ENCODE measurements at regions of chr2 and their contacts with region 1.

Region 1: DNA sequence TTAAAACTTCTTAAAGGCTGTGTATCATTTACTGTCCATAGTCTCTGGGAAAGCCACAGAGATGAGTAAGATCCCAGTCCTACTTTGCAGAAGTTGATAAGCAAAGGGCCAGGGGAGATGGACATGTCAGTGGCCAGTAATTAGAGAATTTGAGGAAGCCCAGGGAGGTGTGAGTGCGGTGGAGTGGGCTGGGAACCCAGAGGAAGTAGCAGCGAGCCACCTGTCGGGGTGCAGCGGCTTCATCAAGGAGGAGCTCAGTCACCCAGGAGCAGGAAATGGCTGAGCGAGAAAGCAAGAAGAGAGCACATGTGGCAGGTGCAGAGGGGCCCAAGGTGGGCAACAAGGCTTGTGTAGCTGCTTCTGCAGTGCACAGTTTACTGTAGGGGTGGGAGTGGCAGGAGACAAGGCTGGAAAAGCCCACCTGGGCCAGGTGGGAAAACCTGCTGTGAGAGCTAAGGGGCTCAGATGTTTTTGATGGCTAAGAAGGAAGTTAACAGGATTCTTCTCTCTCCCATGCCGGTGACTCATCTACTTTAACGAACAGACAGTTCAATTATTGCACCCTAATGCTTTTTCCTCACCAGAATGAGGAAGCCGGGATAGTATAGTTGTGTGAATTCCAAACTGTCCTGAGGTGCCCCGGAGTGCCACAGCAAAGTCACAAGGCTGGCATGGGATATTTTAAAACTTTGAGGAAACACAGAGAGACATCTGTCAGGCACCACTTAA is 34.8 kb upstream of the MGAT5 start:
- DNase-seq: peak; percentile 12 to 77 (median 40)
- ATAC-seq: peak; percentile 71
- H3K4me3 ChIP-seq: peak overlapping the region; percentile 15
- H3K4me3 Mint-ChIP-seq: peak overlapping the region; percentile 49
- H3K27ac ChIP-seq: peak overlapping the region; percentile 32 to 69
- H3K27ac Mint-ChIP-seq: peak overlapping the region; percentile 87
- H3K4me1 ChIP-seq: peaks cover 50% of the 10 kb centered on the region
- H3K4me1 Mint-ChIP-seq: peaks cover 76% of the 10 kb centered on the region
- H3K27me3 ChIP-seq: no peaks in the 10 kb centered on the region
- H3K27me3 Mint-ChIP-seq: no peaks in the 10 kb centered on the region
- CTCF ChIP-seq: no peak

Region 2: GRCh38 chr2:134181210-134181609 is 37.9 kb before region 1 on chr2:
- CTCF ChIA-PET with region 1: interaction called, 4 read pairs
- POLR2A ChIA-PET with region 1: interaction called, 8 read pairs
- intact Hi-C with region 1: loop called in 1 of 2 experiments (anchors 5 kb)
- DNase-seq: peak in 13 of 14 experiments; percentile 38 to 86 (median 51)
- ATAC-seq: peak; percentile 81
- H3K4me3 ChIP-seq: no peak overlapping the region
- H3K4me3 Mint-ChIP-seq: peak overlapping the region; percentile 52
- H3K27ac ChIP-seq: peak overlapping the region in 1 of 2 donors; percentile 48
- H3K27ac Mint-ChIP-seq: peak overlapping the region; percentile 84
- H3K4me1 ChIP-seq: peaks cover 74% of the 10 kb centered on the region
- H3K4me1 Mint-ChIP-seq: peaks cover 96% of the 10 kb centered on the region
- H3K27me3 ChIP-seq: no peaks in the 10 kb centered on the region
- H3K27me3 Mint-ChIP-seq: no peaks in the 10 kb centered on the region
- CTCF ChIP-seq: peak; percentile 22

Region 3: DNA sequence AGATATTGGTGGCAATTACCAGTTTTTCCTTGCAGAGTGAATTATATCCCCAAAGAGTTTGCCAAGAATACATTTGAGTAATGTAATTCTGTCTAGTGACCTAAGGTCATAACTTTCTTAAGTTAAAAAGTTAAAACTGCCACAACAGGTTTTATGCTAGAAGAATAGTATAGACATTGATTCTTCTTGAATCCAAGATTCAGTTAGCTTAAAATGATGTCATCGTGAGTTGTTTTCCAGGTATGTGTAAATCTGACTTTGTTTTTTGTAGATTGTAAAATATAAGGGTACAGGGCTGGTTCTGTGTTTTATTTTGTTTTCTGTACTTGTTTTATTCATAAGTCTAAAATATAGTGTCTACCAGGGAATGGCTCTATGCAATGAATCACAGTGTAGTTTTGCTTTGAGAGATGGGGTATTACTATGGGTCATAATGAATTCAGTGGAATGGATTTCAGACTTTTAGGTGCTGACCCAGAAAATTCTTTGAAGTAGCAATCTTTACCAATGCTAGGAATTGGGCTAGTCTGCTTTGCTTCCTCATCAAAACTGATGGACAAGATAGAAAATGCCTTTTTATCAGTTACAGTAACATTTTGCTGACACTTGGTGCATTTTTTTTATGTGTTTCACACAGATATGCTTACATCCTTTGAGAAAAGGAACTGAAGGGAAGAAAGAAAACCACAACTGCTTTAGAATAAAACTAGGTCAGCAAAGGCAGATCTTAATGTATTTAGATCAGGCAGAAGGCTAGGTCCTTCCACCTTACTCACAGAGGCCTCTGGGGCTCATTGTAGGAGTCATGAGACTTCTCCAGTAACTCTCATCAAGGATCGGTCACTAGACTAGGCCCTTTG is 14.0 kb after region 1 on chr2:
- CTCF ChIA-PET with region 1: no interaction called
- POLR2A ChIA-PET with region 1: interaction called, 11 read pairs
- intact Hi-C with region 1: loop called in 1 of 2 experiments (anchors 1 kb)
- DNase-seq: peak in 5 of 14 experiments; percentile 13 to 84 (median 62)
- ATAC-seq: peak; percentile 75
- H3K4me3 ChIP-seq: peak overlapping the region; percentile 4
- H3K4me3 Mint-ChIP-seq: peak overlapping the region; percentile 52
- H3K27ac ChIP-seq: peak overlapping the region; percentile 40 to 71
- H3K27ac Mint-ChIP-seq: peak overlapping the region; percentile 83
- H3K4me1 ChIP-seq: peaks cover 66% of the 10 kb centered on the region
- H3K4me1 Mint-ChIP-seq: peaks cover 85% of the 10 kb centered on the region
- H3K27me3 ChIP-seq: no peaks in the 10 kb centered on the region
- H3K27me3 Mint-ChIP-seq: no peaks in the 10 kb centered on the region
- CTCF ChIP-seq: no peak

Region 4: DNA sequence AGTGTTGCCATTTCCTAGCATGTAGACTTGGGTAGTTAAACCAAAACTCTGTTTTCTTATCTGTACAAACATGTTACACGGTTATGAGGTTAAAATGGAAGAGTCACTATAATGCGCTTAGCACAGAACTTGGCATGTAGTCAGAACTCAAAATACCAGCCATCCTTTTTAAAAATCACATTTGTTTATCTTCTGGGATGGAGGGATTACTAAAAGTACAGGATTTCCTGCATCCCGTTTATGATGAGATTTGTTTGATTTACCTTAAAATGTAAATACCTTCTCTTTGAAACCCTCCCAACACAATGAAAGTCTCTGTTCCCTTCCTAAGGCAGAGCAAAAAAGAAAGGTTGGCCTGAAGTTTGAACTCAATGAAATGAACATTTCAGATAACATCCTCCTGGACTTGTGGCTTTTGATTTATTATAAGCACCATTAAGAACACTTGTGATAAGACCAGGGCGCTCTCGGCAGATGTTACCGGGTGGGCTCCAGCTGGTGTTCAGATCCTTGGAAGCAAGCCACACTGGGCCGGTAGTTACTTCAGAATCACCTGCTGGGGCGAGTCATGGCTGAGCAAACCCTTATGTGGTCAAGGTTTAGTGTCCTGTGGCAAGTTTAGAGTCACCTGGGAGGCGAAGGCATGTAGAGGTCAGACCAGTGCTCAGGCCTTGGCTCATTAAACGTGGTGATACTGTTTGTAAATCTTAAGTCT is 140.4 kb after region 1 on chr2:
- CTCF ChIA-PET with region 1: no interaction called
- POLR2A ChIA-PET with region 1: no interaction called
- intact Hi-C with region 1: no loop called
- DNase-seq: no peak
- ATAC-seq: no peak
- H3K4me3 ChIP-seq: no peak overlapping the region
- H3K4me3 Mint-ChIP-seq: no peak overlapping the region
- H3K27ac ChIP-seq: no peak overlapping the region
- H3K27ac Mint-ChIP-seq: no peak overlapping the region
- H3K4me1 ChIP-seq: no peaks in the 10 kb centered on the region
- H3K4me1 Mint-ChIP-seq: no peaks in the 10 kb centered on the region
- H3K27me3 ChIP-seq: no peaks in the 10 kb centered on the region
- H3K27me3 Mint-ChIP-seq: no peaks in the 10 kb centered on the region
- CTCF ChIP-seq: no peak

Measured in CD4-positive, alpha-beta T cell (primary cell).